Activated CD8-positive, alpha-beta T cell treated with anti-CD3 and anti-CD28 coated beads for 36 hours (primary cell): ENCODE measurements at regions of chr3 and their contacts with region 1.

Region 1: GRCh38 chr3:128680602-128681368 is 30.2 kb upstream of the RPN1 start:
- DNase-seq: peak; percentile 98
- ATAC-seq: peak; percentile 98
- H3K4me3 Mint-ChIP-seq: peak overlapping the region; percentile 93
- H3K27ac Mint-ChIP-seq: peak overlapping the region; percentile 98
- H3K4me1 Mint-ChIP-seq: peaks cover 19% of the 10 kb centered on the region
- H3K27me3 Mint-ChIP-seq: no peaks in the 10 kb centered on the region
- CTCF ChIP-seq: peak; percentile 90

Region 2: DNA sequence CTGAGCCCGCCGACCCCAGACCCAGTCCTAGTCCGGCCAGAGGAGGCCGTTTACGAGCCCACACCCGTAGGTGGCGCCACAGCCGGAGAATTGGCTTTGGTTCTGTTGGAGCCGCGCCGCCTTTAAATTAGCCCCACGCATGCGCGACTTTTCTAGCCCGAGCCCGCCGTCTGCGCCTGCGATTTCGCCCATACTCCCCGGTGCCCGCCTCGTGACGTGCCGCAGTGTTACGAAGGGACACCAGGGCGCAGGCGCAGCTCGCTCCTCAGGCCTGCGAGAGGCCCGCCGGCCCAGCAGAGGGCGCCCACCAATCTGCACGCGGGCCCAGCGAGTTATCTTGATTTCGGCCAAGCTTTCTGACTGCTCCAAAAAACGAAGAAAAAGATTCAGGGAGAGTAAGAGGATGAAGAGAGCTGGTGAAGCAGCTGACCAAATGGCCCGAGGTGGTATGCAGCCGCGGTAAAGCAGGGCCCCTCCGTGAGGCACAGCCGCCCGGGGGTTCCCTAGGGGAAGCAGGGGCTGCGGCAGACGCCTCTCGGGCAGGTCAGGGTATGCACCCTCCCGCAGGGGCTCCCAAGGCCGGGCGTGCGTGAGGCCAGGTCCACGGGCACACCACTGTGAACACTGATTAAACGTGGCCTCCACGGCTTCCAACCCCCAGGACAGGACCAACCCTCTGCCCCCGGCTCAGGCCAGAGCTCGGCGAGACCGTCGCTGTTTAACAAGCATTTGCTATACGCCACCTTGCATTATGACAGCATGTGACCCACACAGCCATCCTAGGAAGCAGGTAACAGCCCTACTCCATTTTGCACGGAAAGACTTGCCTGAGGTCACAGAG is 63.0 kb before region 1 on chr3:
- CTCF ChIA-PET with region 1: interaction called, 21 read pairs
- POLR2A ChIA-PET with region 1: interaction called, 6 read pairs
- intact Hi-C with region 1: no loop called
- DNase-seq: peak; percentile 99
- ATAC-seq: peak; percentile 90
- H3K4me3 Mint-ChIP-seq: peak overlapping the region; percentile 95
- H3K27ac Mint-ChIP-seq: peak overlapping the region; percentile 94
- H3K4me1 Mint-ChIP-seq: peaks cover 29% of the 10 kb centered on the region
- H3K27me3 Mint-ChIP-seq: no peaks in the 10 kb centered on the region
- CTCF ChIP-seq: peak; percentile 92

Region 3: GRCh38 chr3:128709508-128710210 is 28.9 kb after region 1 on chr3:
- CTCF ChIA-PET with region 1: interaction called, 15 read pairs
- POLR2A ChIA-PET with region 1: interaction called, 3 read pairs
- intact Hi-C with region 1: no loop called
- DNase-seq: no peak
- ATAC-seq: no peak
- H3K4me3 Mint-ChIP-seq: no peak overlapping the region
- H3K27ac Mint-ChIP-seq: no peak overlapping the region
- H3K4me1 Mint-ChIP-seq: peaks cover 1% of the 10 kb centered on the region
- H3K27me3 Mint-ChIP-seq: no peaks in the 10 kb centered on the region
- CTCF ChIP-seq: no peak

Region 4: GRCh38 chr3:128734523-128735189 is 53.9 kb after region 1 on chr3:
- CTCF ChIA-PET with region 1: interaction called, 13 read pairs
- POLR2A ChIA-PET with region 1: interaction called, 4 read pairs
- intact Hi-C with region 1: loop called (anchors 5 kb)
- DNase-seq: no peak
- ATAC-seq: peak; percentile 10
- H3K4me3 Mint-ChIP-seq: no peak overlapping the region
- H3K27ac Mint-ChIP-seq: peak overlapping the region; percentile 13
- H3K4me1 Mint-ChIP-seq: peaks cover 73% of the 10 kb centered on the region
- H3K27me3 Mint-ChIP-seq: no peaks in the 10 kb centered on the region
- CTCF ChIP-seq: no peak

Region 5: GRCh38 chr3:128787256-128788240 is 106.8 kb after region 1 on chr3:
- CTCF ChIA-PET with region 1: interaction called, 46 read pairs
- POLR2A ChIA-PET with region 1: interaction called, 8 read pairs
- intact Hi-C with region 1: no loop called
- DNase-seq: peak; percentile 63
- ATAC-seq: peak; percentile 74
- H3K4me3 Mint-ChIP-seq: peak overlapping the region; percentile 74
- H3K27ac Mint-ChIP-seq: peak overlapping the region; percentile 99
- H3K4me1 Mint-ChIP-seq: peaks cover 96% of the 10 kb centered on the region
- H3K27me3 Mint-ChIP-seq: no peaks in the 10 kb centered on the region
- CTCF ChIP-seq: peak; percentile 72

Region 6: DNA sequence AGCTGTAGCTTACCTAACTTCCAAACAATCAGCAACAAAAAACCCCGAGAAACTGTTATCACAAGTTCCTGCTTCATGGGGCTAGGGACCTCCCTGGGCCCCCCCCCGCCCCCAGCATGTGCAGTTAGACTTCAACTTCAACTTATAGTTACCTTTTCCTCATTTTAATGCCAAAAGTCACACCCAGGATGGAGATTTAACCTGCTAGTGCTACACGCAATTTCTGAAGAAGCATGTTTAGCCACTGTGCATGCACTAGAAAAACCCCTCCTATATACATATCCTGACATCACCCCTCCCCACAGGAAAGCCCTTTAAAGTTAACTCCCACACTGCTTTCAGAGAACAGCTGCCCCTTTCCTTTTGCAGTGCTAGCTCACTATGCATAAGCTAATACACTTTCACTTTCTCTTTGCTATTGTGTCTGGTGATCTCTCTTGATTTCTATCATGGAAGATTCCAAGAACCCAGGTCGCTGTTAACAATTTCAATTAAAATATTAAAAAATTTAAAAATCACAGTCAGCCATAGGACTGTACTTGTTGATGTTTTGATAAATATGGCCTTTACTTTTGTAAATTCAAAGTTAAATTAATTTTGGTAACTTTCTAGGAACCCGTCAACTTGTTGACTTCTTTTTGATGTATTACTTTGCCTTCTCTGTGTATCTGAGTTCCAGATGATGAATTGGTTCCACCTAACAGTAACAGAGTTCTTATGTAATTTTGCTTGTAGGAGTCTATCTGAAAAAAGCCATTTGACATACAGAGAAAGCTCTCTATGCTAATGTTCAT is 123.4 kb after region 1 on chr3:
- CTCF ChIA-PET with region 1: interaction called, 119 read pairs
- POLR2A ChIA-PET with region 1: interaction called, 10 read pairs
- intact Hi-C with region 1: loop called (anchors 2 kb)
- DNase-seq: peak; percentile 84
- ATAC-seq: peak; percentile 81
- H3K4me3 Mint-ChIP-seq: peak overlapping the region; percentile 79
- H3K27ac Mint-ChIP-seq: peak overlapping the region; percentile 88
- H3K4me1 Mint-ChIP-seq: peaks cover 82% of the 10 kb centered on the region
- H3K27me3 Mint-ChIP-seq: no peaks in the 10 kb centered on the region
- CTCF ChIP-seq: no peak

Region 7: GRCh38 chr3:128863560-128863959 is 182.8 kb after region 1 on chr3:
- CTCF ChIA-PET with region 1: interaction called, 12 read pairs
- POLR2A ChIA-PET with region 1: no interaction called
- intact Hi-C with region 1: no loop called
- DNase-seq: peak; percentile 49
- ATAC-seq: peak; percentile 61
- H3K4me3 Mint-ChIP-seq: no peak overlapping the region
- H3K27ac Mint-ChIP-seq: no peak overlapping the region
- H3K4me1 Mint-ChIP-seq: peaks cover 2% of the 10 kb centered on the region
- H3K27me3 Mint-ChIP-seq: no peaks in the 10 kb centered on the region
- CTCF ChIP-seq: peak; percentile 44